BJ (cell line): ENCODE measurements at regions of chr12 and their contacts with region 1.

Region 1: GRCh38 chr12:32698285-32698684 is 19.2 kb downstream of the DNM1L start:
- DNase-seq: no peak
- H3K4me3 ChIP-seq: no peak overlapping the region
- H3K27me3 ChIP-seq: no peaks in the 10 kb centered on the region
- CTCF ChIP-seq: no peak

Region 2: GRCh38 chr12:31728917-31729640 is 969.2 kb before region 1 on chr12 and contains the start of gene AMN1:
- CTCF ChIA-PET with region 1: no interaction called
- POLR2A ChIA-PET with region 1: interaction called, 14 read pairs
- DNase-seq: peak; percentile 98
- H3K4me3 ChIP-seq: peak within 1 kb of the TSS; percentile 47
- H3K27me3 ChIP-seq: no peaks in the 10 kb centered on the region
- CTCF ChIP-seq: no peak
- polyA plus RNA-seq, gene AMN1: 4.2 and 7.8 TPM in 2 replicates